AG04450 (cell line): ENCODE measurements at regions of chr4 and their contacts with region 1.

Region 1: GRCh38 chr4:74932816-74933561 is at the start of gene PARM1:
- DNase-seq: peak; percentile 16
- H3K4me3 ChIP-seq: peak within 1 kb of the TSS; percentile 55
- H3K27ac ChIP-seq: no peak within 1 kb of the TSS
- H3K27me3 ChIP-seq: peaks cover 45% of the 10 kb centered on the region
- CTCF ChIP-seq: peak; percentile 70
- polyA plus RNA-seq, gene PARM1: 0.10 and 0.11 TPM in 2 replicates

Region 2: GRCh38 chr4:74738470-74739140 is 194.4 kb before region 1 on chr4:
- CTCF ChIA-PET with region 1: no interaction called
- POLR2A ChIA-PET with region 1: no interaction called
- DNase-seq: no peak
- H3K4me3 ChIP-seq: no peak overlapping the region
- H3K27ac ChIP-seq: no peak overlapping the region
- H3K27me3 ChIP-seq: no peaks in the 10 kb centered on the region
- CTCF ChIP-seq: no peak

Region 3: DNA sequence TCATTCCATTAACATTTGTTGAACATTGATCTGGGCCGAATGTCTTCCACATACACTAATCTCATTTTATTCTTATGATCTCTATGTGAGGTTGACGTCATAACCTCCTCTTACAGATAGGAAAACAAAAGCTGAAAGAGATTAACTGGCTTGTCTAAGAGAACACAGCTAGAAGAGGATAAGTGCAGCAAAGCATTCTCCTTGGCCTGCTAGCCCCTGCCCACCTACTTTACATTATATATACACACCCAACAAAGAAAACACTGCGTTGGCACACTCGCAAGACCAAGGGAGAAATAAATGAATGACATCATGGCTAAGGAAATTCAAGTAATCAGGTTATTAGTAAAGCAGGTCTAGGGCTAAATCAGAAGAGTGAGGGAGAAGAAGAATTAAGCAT is 138.3 kb after region 1 on chr4:
- CTCF ChIA-PET with region 1: no interaction called
- POLR2A ChIA-PET with region 1: no interaction called
- DNase-seq: no peak
- H3K4me3 ChIP-seq: no peak overlapping the region
- H3K27ac ChIP-seq: no peak overlapping the region
- H3K27me3 ChIP-seq: no peaks in the 10 kb centered on the region
- CTCF ChIP-seq: no peak

Region 4: GRCh38 chr4:75235359-75235951 is 302.5 kb after region 1 on chr4:
- CTCF ChIA-PET with region 1: no interaction called
- POLR2A ChIA-PET with region 1: no interaction called
- DNase-seq: no peak
- H3K4me3 ChIP-seq: no peak overlapping the region
- H3K27ac ChIP-seq: no peak overlapping the region
- H3K27me3 ChIP-seq: no peaks in the 10 kb centered on the region
- CTCF ChIP-seq: no peak

Region 5: GRCh38 chr4:75469896-75470295 is 536.9 kb after region 1 on chr4:
- CTCF ChIA-PET with region 1: interaction called, 13 read pairs
- POLR2A ChIA-PET with region 1: no interaction called
- DNase-seq: no peak
- H3K4me3 ChIP-seq: no peak overlapping the region
- H3K27ac ChIP-seq: no peak overlapping the region
- H3K27me3 ChIP-seq: no peaks in the 10 kb centered on the region
- CTCF ChIP-seq: no peak

Region 6: GRCh38 chr4:75490155-75490554 is 557.2 kb after region 1 on chr4:
- CTCF ChIA-PET with region 1: interaction called, 16 read pairs
- POLR2A ChIA-PET with region 1: no interaction called
- DNase-seq: peak; percentile 7
- H3K4me3 ChIP-seq: no peak overlapping the region
- H3K27ac ChIP-seq: no peak overlapping the region
- H3K27me3 ChIP-seq: no peaks in the 10 kb centered on the region
- CTCF ChIP-seq: peak; percentile 40